CD4-positive, alpha-beta memory T cell (primary cell): ENCODE measurements at regions of chr16 and their contacts with region 1.

Region 1: GRCh38 chr16:2474877-2475412 is at the start of gene TBC1D24:
- DNase-seq: peak; percentile 66 to 73 (median 66)
- H3K4me3 ChIP-seq: peak within 1 kb of the TSS in 1 of 2 donors; percentile 66
- H3K4me3 Mint-ChIP-seq: peak within 1 kb of the TSS; percentile 63 to 81 (median 76)
- H3K27ac ChIP-seq: peak within 1 kb of the TSS; percentile 12
- H3K27ac Mint-ChIP-seq: peak within 1 kb of the TSS in 3 of 7 donors; percentile 42 to 78 (median 62)
- H3K4me1 ChIP-seq: peaks cover 34% of the 10 kb centered on the region
- H3K4me1 Mint-ChIP-seq: peaks cover 6 to 28% (median 14%) of the 10 kb centered on the region in 4 donors
- H3K27me3 ChIP-seq: peaks cover 20% of the 10 kb centered on the region
- H3K27me3 Mint-ChIP-seq: peaks cover 7 to 11% of the 10 kb centered on the region in 2 donors
- total RNA-seq, gene TBC1D24: 9.6 to 13.7 TPM

Region 2: DNA sequence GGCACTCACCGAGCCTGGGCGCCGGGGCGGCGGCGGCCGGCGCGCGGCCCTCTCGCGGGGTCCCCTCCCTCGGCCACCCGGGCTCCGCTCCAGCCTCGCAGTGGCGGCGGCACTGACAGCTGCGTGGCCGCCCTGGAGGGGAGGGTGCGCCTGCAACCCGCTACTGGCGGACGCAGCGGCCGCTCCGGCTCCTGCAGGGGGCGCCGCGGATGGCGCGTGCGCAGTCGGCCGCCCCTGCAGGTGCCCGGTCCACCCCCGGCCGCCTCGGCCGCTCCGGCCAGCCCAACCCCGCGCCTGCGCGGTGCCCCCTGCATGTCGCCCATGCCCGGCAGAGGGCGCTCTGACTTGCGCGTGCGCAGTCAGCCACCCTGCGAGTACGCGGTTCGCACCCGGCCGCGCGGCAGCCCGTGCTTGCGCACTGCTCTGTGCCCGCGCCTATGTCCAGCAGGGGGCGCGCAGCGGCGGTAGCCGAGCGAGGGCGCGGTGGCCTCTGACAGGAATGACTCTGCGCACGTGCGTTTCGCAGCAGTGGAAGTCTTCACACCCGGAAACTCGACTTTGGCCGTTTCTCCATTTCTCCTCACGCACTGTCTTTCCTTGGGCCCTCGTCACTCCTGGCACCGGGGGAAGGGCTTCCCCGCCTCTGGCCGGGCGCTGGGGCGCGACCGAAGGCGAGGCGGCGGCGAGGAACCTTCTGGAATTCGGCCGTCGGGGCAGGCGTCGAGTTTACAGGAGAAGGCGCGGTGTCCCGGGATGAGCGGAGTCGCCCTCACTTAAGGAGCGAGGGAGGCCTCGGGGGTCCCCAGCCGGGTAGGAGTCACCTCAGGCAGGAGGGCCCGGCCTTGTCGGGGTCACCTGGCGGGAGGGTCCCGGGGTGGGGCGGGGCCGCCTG is 134.1 kb before region 1 on chr16 and contains the start of gene ABCA3:
- CTCF ChIA-PET with region 1: no interaction called
- POLR2A ChIA-PET with region 1: no interaction called
- intact Hi-C with region 1: loop called (anchors 1 kb)
- DNase-seq: peak; percentile 85 to 96 (median 93)
- H3K4me3 ChIP-seq: peak within 1 kb of the TSS; percentile 1 to 45
- H3K4me3 Mint-ChIP-seq: peak within 1 kb of the TSS; percentile 84 to 88 (median 86)
- H3K27ac ChIP-seq: no peak within 1 kb of the TSS
- H3K27ac Mint-ChIP-seq: peak within 1 kb of the TSS in 6 of 7 donors; percentile 61 to 84 (median 77)
- H3K4me1 ChIP-seq: peaks cover 17% of the 10 kb centered on the region
- H3K4me1 Mint-ChIP-seq: peaks cover 9 to 26% (median 15%) of the 10 kb centered on the region in 4 donors
- H3K27me3 ChIP-seq: no peaks in the 10 kb centered on the region
- H3K27me3 Mint-ChIP-seq: peaks cover 2% of the 10 kb centered on the region in 2 donors
- total RNA-seq, gene ABCA3: 8.5 to 12.7 TPM

Region 3: DNA sequence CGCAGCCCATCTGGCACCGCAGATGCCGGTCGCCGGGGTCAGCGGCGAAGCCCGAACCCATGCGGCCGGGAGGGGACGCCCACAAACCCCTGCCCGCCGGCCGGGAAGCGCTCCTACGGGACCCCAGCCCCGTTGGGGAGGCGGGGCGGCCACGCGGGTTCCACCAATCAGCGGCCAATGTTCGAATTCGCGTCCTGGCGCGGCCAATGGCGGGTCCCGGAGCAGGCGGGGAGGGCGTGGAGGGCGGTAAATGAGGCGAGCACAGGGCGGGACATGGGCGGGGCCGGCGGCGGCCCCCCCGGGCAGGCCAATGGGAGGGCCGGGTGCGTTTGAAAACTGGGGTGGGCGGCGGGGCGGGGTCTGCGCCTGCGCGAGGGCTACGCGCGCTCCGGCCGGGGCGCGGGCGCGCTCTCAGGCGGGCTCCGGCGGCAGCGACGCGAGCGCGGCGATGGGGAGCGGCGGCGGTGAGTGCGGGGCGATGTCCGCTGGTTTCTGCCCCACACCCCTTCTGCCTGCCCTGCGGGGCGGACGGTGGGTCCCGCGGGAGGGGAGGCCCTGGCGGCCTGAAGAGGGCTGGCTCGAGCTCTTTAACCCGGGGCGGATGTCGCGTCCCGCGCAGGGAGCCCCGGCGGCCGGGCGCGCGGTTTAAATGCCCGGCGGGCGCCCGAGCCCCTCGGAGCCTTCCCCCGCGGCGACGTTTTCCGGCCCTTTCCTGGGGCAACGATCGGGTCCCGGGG is 45.7 kb before region 1 on chr16 and contains the start of gene CCNF:
- CTCF ChIA-PET with region 1: interaction called, 4 read pairs
- POLR2A ChIA-PET with region 1: interaction called, 8 read pairs
- intact Hi-C with region 1: loop called (anchors 1 kb)
- DNase-seq: peak; percentile 91 to 96 (median 93)
- H3K4me3 ChIP-seq: peak within 1 kb of the TSS; percentile 58 to 76
- H3K4me3 Mint-ChIP-seq: peak within 1 kb of the TSS; percentile 88 to 93 (median 90)
- H3K27ac ChIP-seq: peak within 1 kb of the TSS; percentile 67
- H3K27ac Mint-ChIP-seq: peak within 1 kb of the TSS; percentile 70 to 91 (median 85)
- H3K4me1 ChIP-seq: peaks cover 20% of the 10 kb centered on the region
- H3K4me1 Mint-ChIP-seq: peaks cover 14 to 25% (median 16%) of the 10 kb centered on the region in 4 donors
- H3K27me3 ChIP-seq: no peaks in the 10 kb centered on the region
- H3K27me3 Mint-ChIP-seq: no peaks in the 10 kb centered on the region
- total RNA-seq, gene CCNF: 4.7 TPM

Region 4: GRCh38 chr16:2459647-2460390 is 15.1 kb before region 1 on chr16 and contains the start of gene TEDC2:
- CTCF ChIA-PET with region 1: interaction called, 4 read pairs
- POLR2A ChIA-PET with region 1: interaction called, 6 read pairs
- intact Hi-C with region 1: loop called (anchors 1 kb)
- DNase-seq: peak; percentile 94 to 97 (median 96)
- H3K4me3 ChIP-seq: peak within 1 kb of the TSS; percentile 42 to 56
- H3K4me3 Mint-ChIP-seq: peak within 1 kb of the TSS; percentile 86 to 93 (median 88)
- H3K27ac ChIP-seq: peak within 1 kb of the TSS; percentile 53
- H3K27ac Mint-ChIP-seq: peak within 1 kb of the TSS; percentile 38 to 90 (median 80)
- H3K4me1 ChIP-seq: peaks cover 14% of the 10 kb centered on the region
- H3K4me1 Mint-ChIP-seq: peaks cover 5 to 8% (median 6%) of the 10 kb centered on the region in 4 donors
- H3K27me3 ChIP-seq: no peaks in the 10 kb centered on the region
- H3K27me3 Mint-ChIP-seq: no peaks in the 10 kb centered on the region
- total RNA-seq, gene TEDC2: 0.44 to 0.55 TPM

Region 5: DNA sequence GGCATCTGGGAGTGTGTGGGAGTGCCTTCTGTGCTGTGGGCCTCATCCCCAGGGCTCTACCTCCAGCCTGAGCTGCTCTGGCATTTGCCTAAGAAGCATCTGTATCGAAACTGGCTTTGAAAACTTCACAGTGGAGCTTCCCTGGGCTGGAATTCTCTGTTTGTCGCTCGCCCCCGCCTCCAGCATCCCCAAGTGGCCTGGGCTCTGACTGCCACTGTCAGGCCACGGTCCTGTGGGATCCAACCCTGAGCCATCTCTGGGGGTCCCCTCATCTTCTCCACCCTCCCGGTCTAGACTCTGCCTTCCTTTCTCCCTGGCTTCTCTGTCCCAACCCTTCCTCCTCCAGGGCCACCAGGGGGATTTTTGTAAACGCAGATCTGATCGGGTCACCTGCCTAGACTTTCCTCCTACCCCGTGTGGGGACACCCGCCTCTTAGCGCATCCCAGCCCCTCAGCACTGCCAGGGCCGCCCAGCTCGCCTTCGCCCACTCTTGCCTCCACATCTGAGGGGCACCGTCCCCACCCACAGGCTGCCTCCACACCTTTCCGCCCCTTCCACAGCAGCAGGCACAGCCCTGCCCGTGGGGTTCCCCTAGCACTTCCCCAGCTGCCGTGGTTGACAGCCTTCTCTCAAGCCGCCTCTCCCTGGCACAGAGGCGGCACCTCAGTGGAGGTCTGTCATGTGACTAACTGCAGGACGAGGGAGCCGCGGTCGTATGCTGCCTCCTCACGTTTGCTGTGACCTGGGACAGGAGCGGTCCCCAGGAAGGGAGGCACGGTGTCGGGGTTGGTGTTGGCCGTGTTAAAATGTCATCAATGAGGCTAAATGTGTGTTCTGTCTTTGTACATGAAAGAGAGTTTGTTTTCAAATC is 11.9 kb after region 1 on chr16:
- CTCF ChIA-PET with region 1: interaction called, 3 read pairs
- POLR2A ChIA-PET with region 1: interaction called, 8 read pairs
- intact Hi-C with region 1: loop called (anchors 1 kb)
- DNase-seq: peak; percentile 76 to 91 (median 80)
- H3K4me3 ChIP-seq: no peak overlapping the region
- H3K4me3 Mint-ChIP-seq: peak overlapping the region; percentile 23 to 68 (median 58)
- H3K27ac ChIP-seq: no peak overlapping the region
- H3K27ac Mint-ChIP-seq: peak overlapping the region; percentile 66 to 95 (median 89)
- H3K4me1 ChIP-seq: peaks cover 14% of the 10 kb centered on the region
- H3K4me1 Mint-ChIP-seq: peaks cover 9 to 19% (median 13%) of the 10 kb centered on the region in 4 donors
- H3K27me3 ChIP-seq: no peaks in the 10 kb centered on the region
- H3K27me3 Mint-ChIP-seq: no peaks in the 10 kb centered on the region

Region 6: DNA sequence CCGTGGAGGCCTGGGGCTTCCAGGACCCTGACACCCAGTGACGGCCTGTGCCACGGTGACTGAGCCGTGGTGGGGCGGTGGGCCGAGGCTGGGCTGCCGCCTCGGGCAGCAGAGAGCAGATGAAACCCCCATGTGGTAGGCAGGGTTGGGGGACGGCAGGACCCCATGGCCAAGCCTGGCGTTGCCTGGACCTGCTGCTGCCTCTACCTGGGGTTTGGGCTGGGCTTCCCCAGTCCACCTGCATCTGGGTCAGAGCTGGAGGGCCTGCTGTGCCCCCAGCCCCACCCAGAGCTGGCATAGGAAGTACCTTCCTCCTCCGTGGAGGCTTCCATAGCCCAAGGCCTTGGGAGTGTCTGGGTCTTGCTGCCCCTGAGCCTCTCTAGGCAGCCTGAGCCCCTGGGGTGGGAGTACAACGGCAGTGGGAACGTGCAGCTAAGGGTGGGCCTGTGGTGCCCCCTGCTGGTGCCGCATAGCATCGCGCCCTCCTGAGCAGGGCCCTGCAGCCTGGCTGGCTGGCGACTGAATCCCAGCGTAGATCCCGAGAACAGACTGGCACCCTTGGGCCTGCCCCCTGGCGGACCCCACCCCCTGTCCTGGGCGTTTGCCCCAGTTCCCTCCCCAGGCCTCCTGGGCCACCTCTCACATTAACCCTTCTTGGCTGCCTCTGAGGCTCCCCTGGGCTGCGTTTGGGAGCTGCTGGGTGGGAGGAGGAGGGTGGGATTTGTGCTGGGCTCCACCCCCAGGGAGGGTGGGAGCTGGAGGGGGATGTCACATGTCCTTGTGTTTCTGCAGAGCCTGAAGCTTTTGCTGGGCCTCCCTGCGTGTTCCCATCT is 26.2 kb after region 1 on chr16:
- CTCF ChIA-PET with region 1: interaction called, 4 read pairs
- POLR2A ChIA-PET with region 1: no interaction called
- intact Hi-C with region 1: loop called (anchors 2 kb)
- DNase-seq: peak; percentile 73 to 81 (median 75)
- H3K4me3 ChIP-seq: no peak overlapping the region
- H3K4me3 Mint-ChIP-seq: no peak overlapping the region
- H3K27ac ChIP-seq: no peak overlapping the region
- H3K27ac Mint-ChIP-seq: no peak overlapping the region
- H3K4me1 ChIP-seq: no peaks in the 10 kb centered on the region
- H3K4me1 Mint-ChIP-seq: no peaks in the 10 kb centered on the region
- H3K27me3 ChIP-seq: no peaks in the 10 kb centered on the region
- H3K27me3 Mint-ChIP-seq: no peaks in the 10 kb centered on the region

Region 7: DNA sequence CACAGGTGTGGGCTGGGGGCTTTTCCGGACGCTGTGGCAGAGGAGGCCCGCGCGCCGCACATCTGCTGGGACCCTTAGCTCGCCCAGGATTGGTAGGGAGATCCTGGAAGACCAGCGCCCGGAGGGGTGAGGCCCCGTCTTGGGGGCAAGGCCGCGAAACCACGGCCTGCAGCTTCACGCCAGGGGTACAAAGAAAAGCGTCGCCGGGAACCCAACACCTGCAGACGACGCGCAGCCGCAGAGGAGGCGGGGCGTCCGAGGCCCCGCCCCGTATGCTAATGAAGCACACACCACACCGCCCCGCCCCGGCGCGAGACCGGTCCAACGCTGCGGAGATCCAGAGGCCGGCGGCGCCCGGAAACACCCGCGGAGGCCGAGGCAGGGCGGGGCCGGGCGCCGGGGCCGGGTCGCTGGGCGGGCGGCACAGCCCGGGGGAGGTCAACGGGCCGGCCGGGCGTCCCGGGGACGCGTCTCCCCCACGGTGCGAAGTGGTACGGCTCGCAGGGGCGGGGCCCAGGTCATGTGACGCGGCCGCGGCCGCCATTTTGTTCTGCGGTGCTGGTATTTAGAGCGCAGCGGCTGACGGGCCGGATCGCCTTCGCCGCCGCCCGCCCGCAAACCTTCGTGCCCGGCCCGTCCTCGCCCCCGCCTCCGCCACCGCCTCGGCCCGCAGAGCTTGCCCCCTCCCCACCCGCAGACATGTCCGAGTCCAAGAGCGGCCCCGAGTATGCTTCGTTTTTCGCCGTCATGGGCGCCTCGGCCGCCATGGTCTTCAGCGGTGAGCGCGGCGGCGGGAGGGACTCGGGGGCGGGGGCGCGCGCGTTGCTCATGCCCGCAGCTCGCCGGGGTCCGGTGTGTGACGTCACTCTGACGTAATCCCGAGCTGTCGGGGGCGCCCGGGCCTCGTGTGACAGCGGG is 38.7 kb after region 1 on chr16 and contains the start of gene ATP6V0C:
- CTCF ChIA-PET with region 1: no interaction called
- POLR2A ChIA-PET with region 1: interaction called, 5 read pairs
- intact Hi-C with region 1: loop called (anchors 1 kb)
- DNase-seq: peak; percentile 90 to 97 (median 94)
- H3K4me3 ChIP-seq: peak within 1 kb of the TSS; percentile 74 to 77
- H3K4me3 Mint-ChIP-seq: peak within 1 kb of the TSS; percentile 90 to 96 (median 92)
- H3K27ac ChIP-seq: peak within 1 kb of the TSS; percentile 94
- H3K27ac Mint-ChIP-seq: peak within 1 kb of the TSS; percentile 91 to 98 (median 97)
- H3K4me1 ChIP-seq: peaks cover 48% of the 10 kb centered on the region
- H3K4me1 Mint-ChIP-seq: peaks cover 32 to 64% (median 46%) of the 10 kb centered on the region in 4 donors
- H3K27me3 ChIP-seq: no peaks in the 10 kb centered on the region
- H3K27me3 Mint-ChIP-seq: no peaks in the 10 kb centered on the region
- total RNA-seq, gene ATP6V0C: 125 to 129 TPM